Ascending aorta (tissue), 2 donors: ENCODE measurements at regions of chr13 and their contacts with region 1.

Region 1: DNA sequence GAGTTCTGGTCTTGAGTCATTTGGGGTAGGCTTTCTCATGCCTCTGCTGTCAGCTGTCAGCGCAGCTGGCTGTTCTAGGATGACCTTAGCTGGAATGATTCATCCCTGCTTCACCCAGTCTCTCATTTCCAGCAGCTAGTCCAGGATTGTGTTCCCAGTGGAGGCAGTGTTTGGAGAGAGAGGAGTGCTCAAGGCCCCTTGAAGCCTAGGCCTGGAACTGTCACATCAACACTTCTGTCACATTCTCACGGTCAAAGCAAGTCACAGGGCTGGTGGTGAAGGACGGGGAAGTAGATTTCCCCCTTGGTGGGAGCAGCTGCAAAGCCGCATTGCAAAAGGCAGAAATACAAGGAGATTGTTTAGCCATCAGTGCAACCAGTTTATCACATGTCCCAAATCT is 15.2 kb downstream of the TPT1 start:
- DNase-seq: peak; percentile 39 to 88
- H3K4me3 ChIP-seq: no peak overlapping the region
- H3K27ac ChIP-seq: peak overlapping the region; percentile 68 to 91
- H3K4me1 ChIP-seq: peaks cover 15 to 40% of the 10 kb centered on the region in 2 donors
- H3K27me3 ChIP-seq: no peaks in the 10 kb centered on the region
- CTCF ChIP-seq: no peak

Region 2: GRCh38 chr13:44155422-44156293 is 1170.1 kb before region 1 on chr13:
- intact Hi-C with region 1: loop called (anchors 10 kb)
- DNase-seq: peak in 1 of 2 donors; percentile 82
- H3K4me3 ChIP-seq: peak overlapping the region in 1 of 2 donors; percentile 39
- H3K27ac ChIP-seq: peak overlapping the region; percentile 79
- H3K4me1 ChIP-seq: peaks cover 5 to 50% of the 10 kb centered on the region in 2 donors
- H3K27me3 ChIP-seq: no peaks in the 10 kb centered on the region
- CTCF ChIP-seq: no peak

Region 3: DNA sequence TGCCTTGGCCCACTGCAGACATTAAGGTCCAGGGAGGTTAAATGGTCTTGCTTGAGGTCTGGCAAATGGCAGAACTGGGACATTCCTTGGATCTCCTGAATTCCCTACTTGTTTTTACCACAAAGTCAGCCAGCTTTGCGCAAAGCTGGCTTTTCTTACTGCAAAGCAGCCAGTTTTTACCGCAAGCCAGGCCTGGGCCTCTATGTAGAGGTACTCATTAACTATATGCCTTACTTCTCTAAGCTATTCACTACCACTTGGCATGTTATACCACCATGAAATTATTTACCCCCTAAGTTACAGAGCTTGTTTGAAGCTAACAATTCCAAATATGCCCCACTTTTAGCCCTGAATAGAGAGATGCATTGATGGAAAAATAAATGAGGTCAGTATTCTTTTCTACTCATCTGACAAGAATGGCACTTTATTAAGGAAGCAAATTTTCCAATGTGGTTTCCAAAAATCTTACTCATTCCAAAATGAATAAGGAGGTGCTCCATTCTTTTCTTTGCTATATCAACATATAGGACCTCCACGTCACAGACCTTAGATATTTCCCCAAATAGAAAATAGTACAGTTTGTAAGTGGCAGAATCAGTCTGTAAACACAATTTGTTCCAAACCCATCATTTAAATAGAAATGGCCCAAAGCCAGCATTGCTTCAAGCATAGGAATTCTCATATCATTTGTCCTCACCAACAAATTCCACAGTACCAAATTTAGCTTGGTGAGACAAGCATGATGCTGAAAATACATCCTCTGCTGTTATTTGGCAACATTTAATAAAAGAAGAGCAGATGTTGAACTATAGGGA is 605.7 kb before region 1 on chr13:
- intact Hi-C with region 1: loop called (anchors 5 kb)
- DNase-seq: peak in 1 of 2 donors; percentile 71
- H3K4me3 ChIP-seq: no peak overlapping the region
- H3K27ac ChIP-seq: peak overlapping the region; percentile 78 to 82
- H3K4me1 ChIP-seq: peaks cover 0 to 28% of the 10 kb centered on the region in 2 donors
- H3K27me3 ChIP-seq: no peaks in the 10 kb centered on the region
- CTCF ChIP-seq: no peak

Region 4: DNA sequence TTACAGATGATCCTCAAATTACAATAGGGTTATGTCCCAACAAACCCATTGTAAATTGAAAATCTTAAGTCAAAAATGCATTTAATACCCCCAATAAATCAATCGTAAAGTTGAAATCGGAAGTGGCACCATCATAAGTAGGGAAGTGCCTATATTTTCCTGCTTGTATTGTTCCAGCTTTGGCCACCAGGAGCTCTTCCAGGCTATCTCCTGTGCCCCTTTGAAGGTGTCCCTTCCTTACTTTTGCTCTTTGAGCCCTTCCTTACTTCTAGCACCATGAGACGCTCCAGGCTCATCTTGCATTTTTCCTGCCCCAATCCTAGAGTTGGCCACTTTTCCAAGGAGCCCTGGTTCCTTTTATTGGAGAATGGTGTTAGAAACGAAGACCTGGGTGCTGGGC is 586.7 kb before region 1 on chr13:
- intact Hi-C with region 1: no loop called
- DNase-seq: no peak
- H3K4me3 ChIP-seq: no peak overlapping the region
- H3K27ac ChIP-seq: no peak overlapping the region
- H3K4me1 ChIP-seq: peaks cover 0 to 5% of the 10 kb centered on the region in 2 donors
- H3K27me3 ChIP-seq: no peaks in the 10 kb centered on the region
- CTCF ChIP-seq: no peak

Region 5: GRCh38 chr13:45417790-45418534 is 92.2 kb after region 1 on chr13 and contains the start of gene SLC25A30:
- intact Hi-C with region 1: loop called (anchors 5 kb)
- DNase-seq: peak; percentile 87 to 97
- H3K4me3 ChIP-seq: peak within 1 kb of the TSS; percentile 70 to 80
- H3K27ac ChIP-seq: peak within 1 kb of the TSS; percentile 83 to 85
- H3K4me1 ChIP-seq: peaks cover 0 to 7% of the 10 kb centered on the region in 2 donors
- H3K27me3 ChIP-seq: no peaks in the 10 kb centered on the region
- CTCF ChIP-seq: no peak
- total RNA-seq, gene SLC25A30: 1.9 TPM

Region 6: GRCh38 chr13:45799451-45799850 is 473.6 kb after region 1 on chr13:
- intact Hi-C with region 1: no loop called
- DNase-seq: peak in 1 of 2 donors; percentile 19
- H3K4me3 ChIP-seq: no peak overlapping the region
- H3K27ac ChIP-seq: no peak overlapping the region
- H3K4me1 ChIP-seq: no peaks in the 10 kb centered on the region
- H3K27me3 ChIP-seq: no peaks in the 10 kb centered on the region
- CTCF ChIP-seq: no peak